WTC11 (cell line): ENCODE measurements at regions of chr6 and their contacts with region 1.

Region 1: GRCh38 chr6:17200395-17200794 is 80.8 kb upstream of the RBM24 start:
- DNase-seq: peak; percentile 89
- ATAC-seq: peak; percentile 99
- H3K4me3 Mint-ChIP-seq: peak overlapping the region; percentile 57
- H3K27ac Mint-ChIP-seq: no peak overlapping the region
- H3K4me1 Mint-ChIP-seq: peaks cover 4% of the 10 kb centered on the region
- H3K27me3 Mint-ChIP-seq: peaks cover 15% of the 10 kb centered on the region
- CTCF ChIP-seq: peak; percentile 31; the same call in 1 of the 2 replicates

Region 2: DNA sequence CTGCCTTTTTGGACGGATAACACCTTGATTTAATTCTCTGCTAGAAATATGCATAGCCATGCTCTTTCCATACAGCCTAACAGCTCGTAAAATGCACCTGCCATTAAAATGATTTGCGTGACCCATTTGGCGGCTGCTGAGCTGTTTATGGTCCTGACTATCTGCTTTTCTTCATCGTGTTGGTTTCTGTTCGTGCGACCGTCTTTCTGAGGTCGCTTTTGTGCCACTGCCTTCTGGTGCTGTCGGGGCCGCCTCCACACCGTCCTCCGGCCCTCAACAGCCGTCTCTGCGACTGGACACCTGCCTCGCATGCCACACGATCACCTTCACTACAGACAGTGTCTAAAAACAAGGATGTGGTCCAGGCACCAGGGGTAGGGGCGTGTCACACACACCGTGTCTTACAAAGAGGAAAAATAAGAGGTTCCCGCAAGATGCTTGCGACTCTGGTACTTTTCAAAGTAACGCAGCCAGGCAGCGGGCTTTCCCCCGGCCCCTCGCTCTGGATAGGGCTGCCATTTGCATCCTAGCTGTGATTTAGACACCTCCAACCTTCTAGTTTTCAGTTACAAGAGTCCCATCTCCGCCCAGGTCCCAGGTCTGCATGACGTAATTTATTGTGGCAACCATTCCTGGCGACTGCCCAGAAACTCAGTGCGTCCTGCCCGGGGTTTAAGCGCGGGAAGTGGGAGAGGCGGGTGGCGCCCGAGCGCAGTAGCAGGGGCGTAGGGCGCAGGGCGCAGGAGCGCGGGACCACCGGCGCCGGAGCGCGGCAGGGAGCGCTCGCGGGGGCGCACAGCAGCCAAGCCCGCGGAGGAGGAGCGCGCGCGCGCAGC is 98.8 kb before region 1 on chr6 and contains the start of gene STMND1:
- CTCF ChIA-PET with region 1: no interaction called
- POLR2A ChIA-PET with region 1: no interaction called
- DNase-seq: peak; percentile 33
- ATAC-seq: peak; percentile 67
- H3K4me3 Mint-ChIP-seq: peak within 1 kb of the TSS; percentile 76
- H3K27ac Mint-ChIP-seq: no peak within 1 kb of the TSS
- H3K4me1 Mint-ChIP-seq: peaks cover 10% of the 10 kb centered on the region; the same call in 1 of the 2 replicates
- H3K27me3 Mint-ChIP-seq: peaks cover 49% of the 10 kb centered on the region
- CTCF ChIP-seq: no peak
- total RNA-seq, gene STMND1: not detected in 3 replicates

Region 3: GRCh38 chr6:17150096-17150495 is 50.3 kb before region 1 on chr6:
- CTCF ChIA-PET with region 1: no interaction called
- POLR2A ChIA-PET with region 1: no interaction called
- DNase-seq: no peak
- ATAC-seq: no peak
- H3K4me3 Mint-ChIP-seq: no peak overlapping the region
- H3K27ac Mint-ChIP-seq: no peak overlapping the region
- H3K4me1 Mint-ChIP-seq: no peaks in the 10 kb centered on the region
- H3K27me3 Mint-ChIP-seq: peaks cover 3% of the 10 kb centered on the region; the same call in 1 of the 2 replicates
- CTCF ChIP-seq: no peak

Region 4: DNA sequence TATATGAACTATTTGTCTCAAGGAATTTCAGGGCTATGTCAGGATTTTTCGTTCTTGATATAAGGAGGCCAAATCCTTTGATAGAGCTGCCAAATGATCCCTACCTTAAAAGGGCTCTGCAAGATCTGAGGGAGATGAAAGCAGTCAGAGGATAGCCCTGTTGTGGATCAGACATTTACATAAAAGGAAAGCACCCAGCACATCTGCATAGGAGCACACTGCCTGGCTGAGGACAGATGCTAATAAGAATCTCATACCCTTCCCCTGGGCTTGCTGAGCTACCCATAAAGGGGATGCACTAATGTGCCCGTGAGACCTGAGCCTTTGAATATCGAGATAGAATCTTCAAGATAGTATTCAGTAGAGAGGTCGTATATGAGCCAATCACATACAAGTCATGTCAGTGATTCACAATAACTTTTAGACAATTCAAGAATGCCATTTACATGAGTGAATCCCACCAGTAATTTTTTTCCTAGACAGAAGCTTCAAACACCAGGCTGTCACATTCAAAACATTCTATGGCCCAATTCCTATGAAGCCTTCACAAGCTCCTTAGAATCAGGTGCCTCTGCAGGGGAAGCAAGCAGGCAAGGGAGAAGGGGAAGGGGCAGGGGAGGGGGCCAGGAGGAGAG is 27.4 kb before region 1 on chr6:
- CTCF ChIA-PET with region 1: interaction called, 15 read pairs
- POLR2A ChIA-PET with region 1: no interaction called
- DNase-seq: no peak
- ATAC-seq: no peak
- H3K4me3 Mint-ChIP-seq: no peak overlapping the region
- H3K27ac Mint-ChIP-seq: no peak overlapping the region
- H3K4me1 Mint-ChIP-seq: peaks cover 6% of the 10 kb centered on the region
- H3K27me3 Mint-ChIP-seq: 0 out of 2 replicates have a peak, but pooled peaks cover 2% of the 10 kb centered on the region
- CTCF ChIP-seq: no peak

Region 5: DNA sequence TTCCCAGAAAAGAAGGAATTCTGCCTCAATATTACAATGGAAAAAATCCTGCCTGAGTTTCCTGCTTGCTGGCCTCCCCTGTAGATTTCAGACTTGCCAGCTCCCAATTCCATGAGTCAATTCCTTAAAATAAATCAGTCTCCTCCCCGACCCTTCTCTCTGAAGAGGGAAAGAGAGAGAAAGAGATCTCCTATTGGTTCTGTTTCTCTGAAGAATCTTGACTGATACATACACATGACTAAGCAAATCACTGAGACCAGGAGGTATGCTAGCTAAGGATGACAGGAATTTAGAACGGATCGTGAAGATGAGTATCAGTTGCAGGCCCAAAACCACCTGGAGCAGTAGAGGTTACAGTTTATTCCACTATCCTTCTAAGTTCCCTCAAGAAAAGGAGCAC is 69.4 kb after region 1 on chr6:
- CTCF ChIA-PET with region 1: interaction called, 12 read pairs
- POLR2A ChIA-PET with region 1: no interaction called
- DNase-seq: no peak
- ATAC-seq: no peak
- H3K4me3 Mint-ChIP-seq: no peak overlapping the region
- H3K27ac Mint-ChIP-seq: no peak overlapping the region
- H3K4me1 Mint-ChIP-seq: no peaks in the 10 kb centered on the region
- H3K27me3 Mint-ChIP-seq: no peaks in the 10 kb centered on the region; the same call in 1 of the 2 replicates
- CTCF ChIP-seq: no peak

Region 6: DNA sequence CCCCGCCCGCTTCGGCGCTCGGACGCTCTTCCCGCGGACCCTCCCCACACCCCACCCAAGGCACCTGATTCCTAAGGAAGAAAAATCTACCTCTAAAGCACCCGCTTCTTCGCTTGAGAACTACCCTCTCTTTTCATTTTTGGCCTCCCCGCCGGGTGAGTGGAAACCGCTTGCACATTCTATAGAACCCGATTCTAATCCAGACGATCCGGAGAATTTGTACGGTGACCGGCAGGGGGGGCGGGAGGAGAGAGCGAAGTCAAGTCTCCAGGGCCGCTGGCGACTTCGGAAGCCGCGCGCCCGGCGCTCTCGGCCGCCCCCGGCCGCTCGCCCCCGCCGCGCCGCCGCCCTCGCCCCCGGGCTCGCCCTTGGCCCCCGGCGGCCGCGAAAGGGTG is 80.7 kb after region 1 on chr6 and contains the start of gene RBM24:
- CTCF ChIA-PET with region 1: interaction called, 16 read pairs
- POLR2A ChIA-PET with region 1: interaction called, 3 read pairs
- DNase-seq: peak; percentile 71
- ATAC-seq: peak; percentile 49
- H3K4me3 Mint-ChIP-seq: peak within 1 kb of the TSS; percentile 86
- H3K27ac Mint-ChIP-seq: no peak within 1 kb of the TSS
- H3K4me1 Mint-ChIP-seq: peaks cover 17% of the 10 kb centered on the region
- H3K27me3 Mint-ChIP-seq: peaks cover 91% of the 10 kb centered on the region
- CTCF ChIP-seq: no peak
- total RNA-seq, gene RBM24: 0.48 to 0.63 TPM (median 0.57 TPM) in 3 replicates

Region 7: GRCh38 chr6:17354700-17355403 is 154.5 kb after region 1 on chr6:
- CTCF ChIA-PET with region 1: no interaction called
- POLR2A ChIA-PET with region 1: no interaction called
- DNase-seq: no peak
- ATAC-seq: no peak
- H3K4me3 Mint-ChIP-seq: no peak overlapping the region
- H3K27ac Mint-ChIP-seq: no peak overlapping the region
- H3K4me1 Mint-ChIP-seq: no peaks in the 10 kb centered on the region
- H3K27me3 Mint-ChIP-seq: no peaks in the 10 kb centered on the region
- CTCF ChIP-seq: no peak